Common myeloid progenitor, CD34-positive (primary cell): ENCODE measurements at regions of chr10 and their contacts with region 1.

Region 1: DNA sequence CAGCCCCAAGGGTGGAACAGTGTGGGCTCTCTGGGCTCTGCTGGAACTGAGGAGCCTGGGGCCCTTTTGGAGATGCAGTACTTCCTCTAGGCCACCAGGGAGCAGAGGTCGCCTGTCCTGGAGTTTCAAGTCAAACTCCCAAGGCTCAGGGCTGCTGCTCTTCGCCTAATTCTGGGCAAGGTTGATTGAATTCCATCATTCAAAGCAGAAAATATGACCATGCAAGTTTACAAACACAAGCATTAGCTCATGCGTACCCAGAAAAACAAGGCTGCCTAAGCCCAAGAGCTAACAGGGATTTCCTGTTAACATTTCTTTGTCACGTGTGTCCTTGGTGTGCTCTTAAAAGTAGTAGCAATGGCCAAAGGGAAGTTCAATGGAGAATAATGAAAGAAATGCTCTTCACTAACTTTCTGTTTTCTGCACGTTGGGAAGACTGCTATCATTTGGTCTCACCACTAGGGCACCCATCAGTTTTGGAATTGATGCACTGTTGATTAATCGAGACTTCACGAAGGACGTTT is 20.1 kb downstream of the LDB3 start:
- DNase-seq: peak; percentile 69 to 81 (median 80)
- H3K4me3 ChIP-seq: peak overlapping the region in 1 of 7 experiments; percentile 14
- H3K27ac ChIP-seq: no peak overlapping the region
- H3K4me1 ChIP-seq: peaks cover 0 to 6% (median 0%) of the 10 kb centered on the region in 4 experiments
- H3K27me3 ChIP-seq: peaks cover 0 to 17% (median 0%) of the 10 kb centered on the region in 5 experiments

Region 2: DNA sequence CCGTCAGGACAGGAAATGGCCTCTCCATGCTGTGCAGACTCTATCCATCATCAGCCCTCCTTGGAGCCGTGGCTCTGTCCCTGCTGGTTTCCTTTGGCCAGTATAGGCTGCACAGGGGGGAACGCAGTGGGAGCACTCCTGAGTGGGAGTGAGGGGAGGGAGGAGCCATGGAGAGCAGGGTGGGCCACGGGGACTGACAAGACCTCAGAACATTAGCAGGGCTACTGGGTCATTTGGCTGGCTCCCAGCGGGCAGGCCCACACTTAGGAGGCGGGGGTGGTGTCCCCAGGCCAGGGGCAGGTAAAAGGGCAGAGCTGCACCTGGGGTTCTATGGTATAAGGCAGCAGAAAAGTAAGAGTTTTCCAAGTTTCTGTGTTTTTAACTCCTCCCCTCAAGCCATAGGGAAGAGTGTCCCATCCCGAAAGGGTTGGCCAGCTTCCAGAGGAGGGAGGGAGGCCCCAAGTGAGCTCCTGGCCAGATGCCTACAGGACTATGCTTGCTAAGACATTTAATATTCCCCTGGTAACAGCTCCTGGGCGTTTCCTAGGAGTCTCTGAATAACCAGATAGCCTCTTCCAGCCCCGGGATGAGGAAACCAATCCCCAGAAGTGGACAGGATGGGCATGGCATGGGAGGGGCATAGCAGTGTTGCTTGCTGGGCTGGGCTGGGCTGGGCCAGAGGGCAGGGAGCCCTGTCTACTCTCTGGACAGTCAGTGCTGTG is 39.6 kb before region 1 on chr10:
- CTCF ChIA-PET with region 1: no interaction called
- POLR2A ChIA-PET with region 1: no interaction called
- DNase-seq: no peak
- H3K4me3 ChIP-seq: no peak overlapping the region
- H3K27ac ChIP-seq: no peak overlapping the region
- H3K4me1 ChIP-seq: no peaks in the 10 kb centered on the region
- H3K27me3 ChIP-seq: peaks cover 0 to 8% (median 0%) of the 10 kb centered on the region in 5 experiments

Region 3: DNA sequence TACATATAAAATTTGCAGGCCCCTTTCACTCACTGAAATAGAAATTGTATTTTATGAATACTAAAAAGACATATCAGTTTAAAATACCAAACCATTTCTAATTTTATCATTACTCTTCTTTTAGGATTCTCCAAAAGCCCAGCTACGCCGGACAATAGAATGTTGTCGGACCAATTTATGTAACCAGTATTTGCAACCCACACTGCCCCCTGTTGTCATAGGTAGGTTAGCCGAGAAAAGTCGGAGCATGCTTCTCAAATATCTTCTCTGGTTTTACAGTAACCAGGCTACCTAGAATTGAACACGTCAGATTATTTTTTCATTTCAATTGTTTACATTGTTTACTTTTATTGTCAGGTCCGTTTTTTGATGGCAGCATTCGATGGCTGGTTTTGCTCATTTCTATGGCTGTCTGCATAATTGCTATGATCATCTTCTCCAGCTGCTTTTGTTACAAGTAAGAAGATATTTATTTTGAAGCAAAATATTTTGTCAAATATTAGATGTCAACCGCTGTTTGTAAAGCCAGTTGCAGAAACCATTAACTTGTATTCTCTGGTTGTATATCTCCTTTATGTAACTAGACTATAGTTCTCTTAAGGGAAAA is 211.3 kb after region 1 on chr10:
- CTCF ChIA-PET with region 1: interaction called, 47 read pairs
- POLR2A ChIA-PET with region 1: no interaction called
- DNase-seq: peak; percentile 66 to 76 (median 68)
- H3K4me3 ChIP-seq: no peak overlapping the region
- H3K27ac ChIP-seq: no peak overlapping the region
- H3K4me1 ChIP-seq: no peaks in the 10 kb centered on the region
- H3K27me3 ChIP-seq: peaks cover 0 to 26% (median 3%) of the 10 kb centered on the region in 5 experiments